ENCODE measurements at regions of chr15 and their contacts with region 1.

Region 1: DNA sequence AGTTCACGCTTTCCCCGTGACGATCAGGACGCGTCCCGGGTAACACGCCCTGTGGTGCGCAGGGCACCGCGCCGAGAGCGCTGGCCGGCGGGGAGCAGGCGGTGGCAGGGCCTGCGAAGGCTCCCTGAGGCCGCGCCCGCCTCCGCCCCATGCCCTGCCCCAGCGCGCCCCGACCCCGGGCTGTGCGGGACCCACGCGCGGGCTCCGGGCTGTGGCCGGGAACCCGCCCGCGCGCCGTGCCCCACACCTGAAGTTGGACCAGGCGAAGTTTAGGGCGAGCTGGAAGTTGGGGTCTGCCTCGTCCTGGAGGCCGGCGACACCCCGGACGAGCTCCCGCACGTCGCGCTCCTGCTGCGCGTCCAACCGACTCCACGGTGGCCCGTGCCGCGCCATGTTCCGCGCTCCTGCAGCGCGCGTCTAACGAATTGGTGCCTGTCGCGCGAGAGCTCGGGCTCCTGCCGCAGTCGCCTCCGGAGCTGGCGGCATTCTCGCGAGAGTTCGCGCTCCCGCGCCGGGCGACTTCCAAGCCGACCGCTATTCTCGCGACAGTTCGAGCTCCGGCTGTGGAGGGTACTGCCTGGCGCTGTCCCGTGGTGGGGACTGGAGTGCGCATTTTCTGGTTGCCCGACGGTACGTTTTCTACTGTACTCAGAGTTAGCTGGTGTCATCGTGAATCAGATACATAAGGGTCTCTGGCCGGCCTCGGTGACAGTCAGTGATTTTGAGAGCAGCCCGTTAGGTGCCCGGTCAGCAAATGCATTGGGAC is at the start of gene TUBGCP5:
- DNase-seq: peak; percentile 92 to 98 (median 94)
- ATAC-seq: peak; percentile 97
- H3K4me3 ChIP-seq: peak within 1 kb of the TSS; percentile 93
- H3K27ac ChIP-seq: peak within 1 kb of the TSS; percentile 89
- H3K4me1 ChIP-seq: peaks cover 3 to 6% of the 10 kb centered on the region in 2 experiments; a peak in 4 of 5 replicates
- H3K27me3 ChIP-seq: no peaks in the 10 kb centered on the region
- CTCF ChIP-seq: peak; percentile 34 to 64 (median 38); a peak in 4 of 6 replicates
- EP300 ChIP-seq: no peak; the same call in 1 of the 2 replicates
- POLR2A ChIP-seq: peak; percentile 94
- RAD21 ChIP-seq: no peak
- polyA plus RNA-seq, gene TUBGCP5: 5.8 to 7.7 TPM

Region 2: DNA sequence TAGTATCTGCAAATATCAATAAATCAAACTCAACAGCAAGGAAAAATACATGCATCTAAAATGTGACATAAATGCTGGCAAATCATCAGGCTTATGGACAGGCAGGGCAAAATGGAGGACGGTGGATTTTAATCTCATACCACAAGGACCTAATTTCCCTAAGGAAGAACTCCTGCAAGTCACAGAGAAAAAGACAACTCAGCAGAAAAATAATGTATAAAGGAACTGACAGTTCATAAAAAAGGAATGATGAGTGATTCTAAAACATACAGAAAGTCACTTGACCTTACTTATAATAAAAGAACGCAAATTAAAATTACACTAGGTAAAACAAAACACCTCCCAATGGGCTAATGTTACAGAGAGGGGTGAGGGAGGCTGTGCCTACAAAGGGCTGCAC is 17.2 kb before region 1 on chr15:
- CTCF ChIA-PET with region 1: no interaction called
- POLR2A ChIA-PET with region 1: interaction called, 19 read pairs
- in situ Hi-C with region 1: no loop called
- intact Hi-C with region 1: no loop called
- DNase-seq: no peak
- ATAC-seq: no peak
- H3K4me3 ChIP-seq: no peak overlapping the region
- H3K27ac ChIP-seq: no peak overlapping the region
- H3K4me1 ChIP-seq: no peaks in the 10 kb centered on the region
- H3K27me3 ChIP-seq: no peaks in the 10 kb centered on the region
- CTCF ChIP-seq: no peak
- EP300 ChIP-seq: no peak
- POLR2A ChIP-seq: no peak
- RAD21 ChIP-seq: no peak

Region 3: GRCh38 chr15:23081271-23081670 is 41.9 kb after region 1 on chr15:
- CTCF ChIA-PET with region 1: no interaction called
- POLR2A ChIA-PET with region 1: interaction called, 3 read pairs
- in situ Hi-C with region 1: no loop called
- intact Hi-C with region 1: loop called (anchors 5 kb)
- DNase-seq: no peak
- ATAC-seq: no peak
- H3K4me3 ChIP-seq: no peak overlapping the region
- H3K27ac ChIP-seq: no peak overlapping the region
- H3K4me1 ChIP-seq: no peaks in the 10 kb centered on the region; a peak in 1 of 5 replicates
- H3K27me3 ChIP-seq: peaks cover 4 to 7% of the 10 kb centered on the region in 2 experiments; a peak in 3 of 5 replicates
- CTCF ChIP-seq: no peak
- EP300 ChIP-seq: no peak
- POLR2A ChIP-seq: no peak
- RAD21 ChIP-seq: no peak